ENCODE measurements at regions of chr2 and their contacts with region 1.

Region 1: DNA sequence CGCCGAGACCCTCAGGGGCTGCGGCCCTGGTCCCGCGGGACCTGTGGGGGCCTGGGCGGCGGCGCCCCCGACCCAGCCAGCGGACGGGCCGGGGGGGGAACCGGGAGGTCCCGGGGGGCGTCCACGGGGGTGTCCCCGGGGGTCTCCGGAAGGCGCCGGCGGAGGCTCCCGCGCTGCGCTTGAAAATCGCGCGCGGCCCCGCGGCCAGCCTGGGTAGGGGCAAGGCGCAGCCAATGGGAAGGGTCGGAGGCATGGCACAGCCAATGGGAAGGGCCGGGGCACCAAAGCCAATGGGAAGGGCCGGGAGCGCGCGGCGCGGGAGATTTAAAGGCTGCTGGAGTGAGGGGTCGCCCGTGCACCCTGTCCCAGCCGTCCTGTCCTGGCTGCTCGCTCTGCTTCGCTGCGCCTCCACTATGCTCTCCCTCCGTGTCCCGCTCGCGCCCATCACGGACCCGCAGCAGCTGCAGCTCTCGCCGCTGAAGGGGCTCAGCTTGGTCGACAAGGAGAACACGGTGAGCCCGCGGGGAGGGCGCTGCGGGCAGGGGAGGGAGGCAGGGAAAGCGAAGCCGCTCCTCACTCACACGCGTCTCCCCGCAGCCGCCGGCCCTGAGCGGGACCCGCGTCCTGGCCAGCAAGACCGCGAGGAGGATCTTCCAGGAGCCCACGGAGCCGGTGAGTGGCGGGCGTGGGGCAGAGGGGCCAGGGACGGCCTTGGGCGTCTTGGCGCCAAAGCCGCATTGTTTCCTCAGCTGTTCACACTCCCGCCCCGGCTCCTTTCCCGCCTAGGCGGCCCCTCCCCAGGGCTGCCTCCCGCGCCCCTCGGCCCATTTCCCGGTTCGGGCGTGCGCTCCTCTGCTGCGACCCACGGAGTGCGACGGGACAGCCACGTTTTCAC is at the start of gene RRM2:
- DNase-seq: peak; percentile 96
- CTCF ChIP-seq: no peak

Region 2: DNA sequence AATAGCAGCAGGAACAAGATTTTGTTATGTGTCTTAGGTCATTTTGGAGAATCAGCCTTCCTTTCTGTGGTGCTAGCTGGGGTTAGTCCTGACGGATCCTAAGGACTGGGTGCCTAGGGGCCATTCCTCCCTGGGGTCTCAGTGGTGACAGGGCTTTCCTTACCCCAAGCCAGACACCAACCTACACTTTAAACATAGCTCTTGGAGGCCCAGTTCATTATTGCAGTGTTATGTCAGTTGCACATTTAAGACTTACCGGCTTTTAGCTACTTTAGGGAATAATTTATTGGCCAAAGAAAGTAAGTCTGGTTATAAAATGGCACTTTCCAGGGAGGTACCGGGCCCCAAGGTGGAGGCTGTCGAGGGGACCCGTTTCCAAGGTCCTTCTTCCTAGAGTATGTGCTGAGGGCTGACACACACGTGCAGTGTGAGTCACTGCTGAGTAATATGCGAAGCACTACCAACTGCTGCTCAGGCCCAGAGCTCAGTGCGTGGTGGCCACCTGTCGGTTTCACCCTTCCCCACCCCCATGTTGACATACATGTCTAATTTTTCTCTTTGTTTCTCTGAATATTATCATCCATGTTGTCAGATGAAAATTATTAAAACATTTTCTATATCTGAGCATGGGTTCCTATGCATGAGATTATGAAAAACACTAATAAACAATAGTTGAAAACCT is 208.1 kb before region 1 on chr2:
- CTCF ChIA-PET with region 1: no interaction called
- POLR2A ChIA-PET with region 1: no interaction called
- DNase-seq: peak; percentile 71
- CTCF ChIP-seq: peak; percentile 53

Region 3: DNA sequence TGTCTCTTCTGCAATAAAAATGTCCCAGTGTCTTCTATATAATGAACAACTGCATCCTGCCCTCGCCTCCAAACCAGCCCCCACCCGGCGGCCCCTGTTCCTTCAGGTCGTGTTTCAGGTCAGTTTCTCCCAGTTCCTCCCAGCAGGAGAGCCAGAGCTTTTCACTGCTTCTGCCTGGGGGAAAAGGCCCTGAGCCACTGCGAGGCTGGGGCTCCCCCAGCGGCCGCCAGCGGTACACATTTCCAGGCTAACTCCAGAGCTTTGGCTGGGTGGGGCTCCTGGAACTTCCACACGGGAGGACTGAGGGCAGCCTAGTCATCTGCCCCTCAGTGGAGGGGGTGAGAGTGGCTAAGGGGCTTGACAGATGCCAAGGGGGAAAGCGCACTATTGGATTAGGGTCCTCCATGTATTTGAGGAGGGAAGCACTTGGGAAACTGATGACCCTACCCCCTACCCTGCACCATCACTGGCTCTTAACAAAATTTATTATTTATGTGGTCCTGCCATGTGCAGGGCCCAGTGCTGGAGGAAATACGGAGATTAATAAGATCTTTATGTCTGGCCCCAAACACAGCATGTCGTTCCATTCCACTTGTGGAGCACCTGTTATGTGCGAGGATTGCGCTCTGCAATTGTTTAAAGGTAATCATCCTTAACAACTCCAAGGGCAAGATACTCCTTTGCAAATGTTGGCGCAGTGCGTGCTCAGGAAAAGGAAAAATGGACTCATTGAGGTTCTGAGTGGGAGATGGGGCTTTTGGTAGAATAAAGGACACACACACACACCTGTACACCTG is 25.1 kb before region 1 on chr2:
- CTCF ChIA-PET with region 1: interaction called, 30 read pairs
- POLR2A ChIA-PET with region 1: no interaction called
- DNase-seq: peak; percentile 76
- CTCF ChIP-seq: peak; percentile 92

Region 4: DNA sequence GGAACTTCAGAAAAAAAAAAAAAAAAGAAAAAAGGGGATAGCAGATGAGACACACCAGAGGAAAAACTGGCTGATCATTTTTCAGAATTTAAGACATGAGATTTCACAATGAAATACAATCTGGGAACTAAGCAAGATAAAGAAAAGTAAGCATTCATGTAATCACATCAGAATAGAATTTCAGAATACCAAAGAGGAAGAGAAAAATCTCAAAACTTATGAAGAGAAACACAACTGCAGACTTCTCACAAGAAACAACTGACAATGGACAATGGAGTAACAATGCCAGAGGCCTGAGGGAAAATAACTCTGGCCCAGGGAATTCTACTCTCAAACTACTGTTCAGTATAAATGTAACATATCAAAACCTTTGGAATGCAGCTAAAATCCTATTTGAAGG is 13.3 kb before region 1 on chr2:
- CTCF ChIA-PET with region 1: interaction called, 22 read pairs
- POLR2A ChIA-PET with region 1: no interaction called
- DNase-seq: no peak
- CTCF ChIP-seq: no peak

Region 5: DNA sequence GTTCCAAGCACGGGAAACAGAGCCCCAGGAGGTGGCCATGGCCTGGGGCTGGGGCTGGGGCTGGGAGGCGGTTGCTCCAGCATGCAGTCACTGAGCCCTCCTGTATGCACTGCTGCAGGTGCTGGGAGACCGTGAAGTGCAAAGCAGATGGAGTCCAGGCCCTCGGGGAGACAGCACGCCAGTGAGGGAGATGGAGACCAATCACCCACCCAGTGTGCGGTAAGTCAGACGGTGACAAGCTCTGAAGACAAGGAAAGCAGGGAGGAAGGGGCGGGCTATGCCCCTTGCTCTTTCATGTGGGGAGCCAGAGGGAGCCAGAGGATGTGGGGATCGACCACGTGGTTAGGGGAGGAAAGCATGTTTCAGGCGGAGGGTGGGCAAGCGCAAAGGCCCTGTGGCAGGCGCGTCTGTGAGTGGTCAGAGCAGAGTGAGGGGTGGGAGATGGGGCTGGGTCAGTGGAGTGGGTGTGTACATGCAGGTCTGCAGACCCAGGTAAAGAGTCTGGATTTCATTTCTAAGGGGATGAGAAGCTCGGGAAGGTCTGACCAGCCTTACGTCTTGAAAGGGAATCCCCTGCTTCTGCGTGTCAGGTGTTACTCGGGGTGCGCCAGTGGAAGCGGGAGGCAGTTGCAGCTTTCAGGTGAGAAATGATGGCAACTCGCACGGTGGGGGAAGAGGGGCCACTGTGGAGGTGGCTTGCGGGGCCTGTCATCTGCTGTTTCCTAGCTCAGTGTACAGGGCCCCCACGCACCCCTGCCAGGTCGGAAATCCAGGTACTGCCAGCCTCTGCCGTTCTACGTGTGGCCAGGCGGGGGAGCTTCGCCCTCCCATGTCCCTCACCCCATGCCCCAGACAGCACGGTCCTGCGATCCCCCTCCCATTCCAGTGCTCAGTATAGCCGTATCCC is 19.4 kb after region 1 on chr2:
- CTCF ChIA-PET with region 1: interaction called, 31 read pairs
- POLR2A ChIA-PET with region 1: no interaction called
- DNase-seq: no peak
- CTCF ChIP-seq: peak; percentile 67

Region 6: GRCh38 chr2:10289891-10290290 is 167.3 kb after region 1 on chr2:
- CTCF ChIA-PET with region 1: no interaction called
- POLR2A ChIA-PET with region 1: no interaction called
- DNase-seq: no peak
- CTCF ChIP-seq: no peak

Region 7: DNA sequence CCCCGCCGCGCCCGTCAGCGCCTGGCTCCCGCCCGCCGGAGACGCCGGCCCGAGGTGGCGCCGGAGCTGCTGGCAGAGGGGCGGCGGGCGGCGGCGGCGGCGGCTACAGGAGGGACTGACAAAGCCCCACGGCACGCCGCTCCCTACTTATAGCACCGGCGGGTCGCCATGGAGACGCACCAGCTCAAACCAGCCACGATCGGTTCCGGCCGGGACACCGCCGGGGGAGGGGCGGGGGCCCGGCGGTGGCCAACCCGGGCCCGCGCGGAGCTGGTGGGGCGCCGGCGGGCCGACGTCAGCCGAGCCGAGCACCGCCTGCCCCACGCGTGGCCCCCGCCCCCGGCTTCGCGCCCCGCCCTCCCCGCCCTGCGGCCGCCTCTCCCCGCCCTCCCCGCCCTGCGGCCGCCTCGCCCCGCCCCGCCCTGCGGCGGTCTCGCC is 325.6 kb after region 1 on chr2 and contains the start of gene ODC1:
- CTCF ChIA-PET with region 1: interaction called, 12 read pairs
- POLR2A ChIA-PET with region 1: interaction called, 3 read pairs
- DNase-seq: peak; percentile 98
- CTCF ChIP-seq: no peak